K562 (cell line): ENCODE measurements at regions of chr17 and their contacts with region 1.

Region 1: GRCh38 chr17:7323731-7324437 is 5.3 kb downstream of the NEURL4 start:
- DNase-seq: peak; percentile 49 to 59 (median 53)
- ATAC-seq: peak; percentile 82
- H3K4me3 ChIP-seq: no peak overlapping the region
- H3K27ac ChIP-seq: no peak overlapping the region
- H3K4me1 ChIP-seq: peaks cover 0 to 23% of the 10 kb centered on the region in 2 experiments; a peak in 3 of 5 replicates
- H3K27me3 ChIP-seq: no peaks in the 10 kb centered on the region
- CTCF ChIP-seq: peak; percentile 69 to 87 (median 75)
- EP300 ChIP-seq: no peak
- POLR2A ChIP-seq: no peak
- RAD21 ChIP-seq: peak in 1 of 2 experiments; percentile 65; a peak in 3 of 4 replicates

Region 2: DNA sequence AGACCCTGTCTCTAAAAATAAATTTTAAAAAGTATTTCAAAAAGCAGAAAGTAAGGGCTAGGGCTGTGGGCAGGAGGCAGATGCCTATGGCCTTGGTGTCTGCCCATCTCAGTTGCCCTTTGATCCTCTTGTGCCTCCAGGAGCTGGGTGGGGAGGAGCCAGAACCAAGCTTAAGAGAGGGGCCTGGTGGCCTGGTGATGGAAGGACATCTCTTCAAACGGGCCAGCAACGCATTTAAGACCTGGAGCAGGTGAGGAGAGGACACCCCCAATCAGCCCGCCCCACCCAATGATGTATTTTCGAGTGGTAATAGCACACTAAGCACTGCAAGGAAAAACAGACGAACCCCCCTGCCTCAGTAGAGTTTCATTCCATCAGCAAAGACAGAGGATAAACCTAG is 20.5 kb after region 1 on chr17:
- CTCF ChIA-PET with region 1: interaction called, 13 read pairs
- POLR2A ChIA-PET with region 1: no interaction called
- in situ Hi-C with region 1: no loop called
- intact Hi-C with region 1: no loop called
- DNase-seq: no peak
- ATAC-seq: no peak
- H3K4me3 ChIP-seq: no peak overlapping the region
- H3K27ac ChIP-seq: no peak overlapping the region
- H3K4me1 ChIP-seq: peaks cover 0 to 29% of the 10 kb centered on the region in 2 experiments; a peak in 3 of 5 replicates
- H3K27me3 ChIP-seq: no peaks in the 10 kb centered on the region
- CTCF ChIP-seq: no peak
- EP300 ChIP-seq: no peak
- POLR2A ChIP-seq: no peak
- RAD21 ChIP-seq: no peak